ENCODE measurements at regions of chr6 and their contacts with region 1.

Region 1: DNA sequence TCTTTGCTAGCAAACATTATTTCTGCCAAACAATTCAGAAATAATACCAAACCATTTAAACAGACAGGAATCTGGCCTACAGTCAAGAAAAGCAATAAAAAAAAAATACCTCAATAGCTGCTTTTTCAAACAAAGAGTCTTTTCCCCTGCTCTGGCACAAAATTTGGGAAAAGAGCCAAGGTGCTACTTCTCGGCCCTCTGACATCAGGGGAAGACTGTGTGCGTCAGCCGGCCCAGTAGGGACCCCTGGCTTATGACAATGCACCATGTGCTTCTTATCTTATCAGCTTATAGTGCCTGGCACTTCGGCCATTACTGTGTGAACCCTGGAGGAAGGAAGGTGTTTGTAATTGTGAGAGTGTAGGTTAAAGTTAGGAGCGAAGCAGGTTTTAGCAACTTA is 89.4 kb downstream of the PDE10A start:
- DNase-seq: peak; percentile 92
- ATAC-seq: peak; percentile 10; the same call in 1 of the 2 replicates
- H3K4me3 ChIP-seq: no peak overlapping the region
- H3K27ac ChIP-seq: 0 out of 2 replicates have a peak overlapping the region, but pooled peaks have one; percentile 5
- H3K4me1 ChIP-seq: peaks cover 20% of the 10 kb centered on the region
- H3K27me3 ChIP-seq: no peaks in the 10 kb centered on the region
- CTCF ChIP-seq: no peak
- POLR2A ChIP-seq: no peak
- RAD21 ChIP-seq: no peak

Region 2: GRCh38 chr6:165515963-165516624 is 57.6 kb before region 1 on chr6:
- CTCF ChIA-PET with region 1: interaction called, 3 read pairs
- POLR2A ChIA-PET with region 1: interaction called, 3 read pairs
- dilution Hi-C with region 1: no loop called
- in situ Hi-C with region 1: no loop called
- intact Hi-C with region 1: loop called (anchors 5 kb)
- DNase-seq: peak; percentile 78
- ATAC-seq: peak; percentile 69
- H3K4me3 ChIP-seq: no peak overlapping the region
- H3K27ac ChIP-seq: 0 out of 2 replicates have a peak overlapping the region, but pooled peaks have one; percentile 27
- H3K4me1 ChIP-seq: peaks cover 8% of the 10 kb centered on the region
- H3K27me3 ChIP-seq: no peaks in the 10 kb centered on the region
- CTCF ChIP-seq: no peak
- POLR2A ChIP-seq: no peak
- RAD21 ChIP-seq: no peak

Region 3: GRCh38 chr6:165636402-165637048 is 62.9 kb after region 1 on chr6:
- CTCF ChIA-PET with region 1: no interaction called
- POLR2A ChIA-PET with region 1: no interaction called
- dilution Hi-C with region 1: no loop called
- in situ Hi-C with region 1: no loop called
- intact Hi-C with region 1: loop called (anchors 5 kb)
- DNase-seq: peak; percentile 64
- ATAC-seq: peak; percentile 64
- H3K4me3 ChIP-seq: no peak overlapping the region
- H3K27ac ChIP-seq: peak overlapping the region; percentile 26; the same call in 1 of the 2 replicates
- H3K4me1 ChIP-seq: peaks cover 17% of the 10 kb centered on the region
- H3K27me3 ChIP-seq: no peaks in the 10 kb centered on the region
- CTCF ChIP-seq: no peak
- POLR2A ChIP-seq: no peak
- RAD21 ChIP-seq: no peak

Measured in IMR-90 (cell line).